ENCODE measurements at regions of chr14 and their contacts with region 1.

Region 1: DNA sequence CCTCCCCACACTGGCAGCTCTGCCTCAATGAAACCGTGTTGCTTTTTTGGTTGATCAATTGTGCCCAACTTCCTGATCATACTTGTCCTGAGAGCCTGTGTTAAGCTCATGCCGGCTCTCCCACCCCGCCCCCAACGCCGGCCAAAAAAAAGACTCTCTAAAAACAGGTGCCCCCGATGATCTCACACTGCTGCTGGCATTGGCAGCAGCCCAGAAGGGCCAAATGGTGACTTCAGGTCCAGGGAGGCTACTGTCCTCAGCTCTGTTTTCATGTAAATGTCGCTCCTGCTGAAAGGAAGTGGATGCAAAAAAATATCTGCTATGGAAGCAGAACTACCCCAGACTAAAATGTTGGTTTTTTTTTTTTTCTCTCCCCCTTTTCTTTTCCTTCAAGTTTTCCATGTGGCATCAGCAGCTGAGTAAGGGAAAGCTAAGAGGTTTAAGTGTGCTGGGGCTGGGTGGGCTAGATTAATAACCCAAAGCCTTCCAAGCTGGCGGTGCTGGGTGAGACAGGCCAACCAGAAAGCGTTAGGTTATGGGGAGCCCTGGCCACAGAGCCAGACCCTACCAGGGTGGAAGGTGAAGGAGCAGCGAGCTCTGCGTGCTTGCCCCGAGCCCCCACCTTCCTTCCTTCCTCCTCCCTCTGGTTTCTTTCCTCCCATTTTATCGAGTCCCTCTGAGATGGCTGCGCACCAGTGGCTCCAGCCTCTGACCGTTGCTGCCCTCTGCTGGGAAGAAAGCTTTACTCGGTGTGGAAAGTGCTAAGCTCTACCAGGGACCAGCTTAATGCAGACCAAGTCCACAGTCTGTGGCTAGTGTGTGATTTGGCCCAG is 396.1 kb downstream of the NRXN3 start:
- DNase-seq: peak in 1 of 2 donors; percentile 86
- H3K4me3 ChIP-seq: peak overlapping the region; percentile 42 to 53
- H3K27ac ChIP-seq: no peak overlapping the region
- H3K4me1 ChIP-seq: no peaks in the 10 kb centered on the region
- H3K27me3 ChIP-seq: no peaks in the 10 kb centered on the region
- CTCF ChIP-seq: peak; percentile 34 to 74 (median 63)

Region 2: GRCh38 chr14:77654001-77654441 is 912.2 kb before region 1 on chr14:
- intact Hi-C with region 1: loop called (anchors 10 kb)
- DNase-seq: no peak
- H3K4me3 ChIP-seq: no peak overlapping the region
- H3K27ac ChIP-seq: no peak overlapping the region
- H3K4me1 ChIP-seq: no peaks in the 10 kb centered on the region
- H3K27me3 ChIP-seq: no peaks in the 10 kb centered on the region
- CTCF ChIP-seq: no peak

Region 3: GRCh38 chr14:78425330-78425729 is 140.9 kb before region 1 on chr14:
- intact Hi-C with region 1: no loop called
- DNase-seq: no peak
- H3K4me3 ChIP-seq: no peak overlapping the region
- H3K27ac ChIP-seq: no peak overlapping the region
- H3K4me1 ChIP-seq: no peaks in the 10 kb centered on the region
- H3K27me3 ChIP-seq: no peaks in the 10 kb centered on the region
- CTCF ChIP-seq: no peak